ENCODE measurements at regions of chr1 and their contacts with region 1.

Region 1: DNA sequence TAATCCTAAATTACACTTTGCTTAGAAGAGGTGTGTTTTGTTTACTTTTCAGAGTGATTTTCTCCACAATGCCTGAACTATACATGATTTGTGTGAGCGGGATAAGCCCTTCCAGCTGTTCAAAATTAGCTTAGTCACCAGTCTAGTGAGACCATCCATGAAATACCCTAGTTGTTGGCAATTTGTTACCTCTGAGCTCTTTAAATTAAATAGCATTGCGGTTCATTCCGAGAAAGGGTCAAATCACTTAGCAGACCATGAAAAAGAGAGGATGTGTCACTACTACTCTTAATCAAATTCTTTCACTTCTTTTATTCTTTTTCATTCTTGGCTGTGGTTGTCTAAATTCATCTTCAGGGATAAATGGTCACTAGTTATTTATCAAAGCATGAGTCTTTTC is 11.9 kb upstream of the VAV3 start:
- DNase-seq: peak; percentile 59
- H3K4me3 ChIP-seq: no peak overlapping the region
- H3K27ac ChIP-seq: no peak overlapping the region
- H3K4me1 ChIP-seq: peaks cover 4% of the 10 kb centered on the region
- H3K27me3 ChIP-seq: peaks cover 34% of the 10 kb centered on the region
- CTCF ChIP-seq: no peak

Region 2: GRCh38 chr1:108034406-108034805 is 57.6 kb after region 1 on chr1:
- CTCF ChIA-PET with region 1: no interaction called
- POLR2A ChIA-PET with region 1: no interaction called
- intact Hi-C with region 1: loop called (anchors 5 kb)
- DNase-seq: no peak
- H3K4me3 ChIP-seq: no peak overlapping the region
- H3K27ac ChIP-seq: no peak overlapping the region
- H3K4me1 ChIP-seq: no peaks in the 10 kb centered on the region
- H3K27me3 ChIP-seq: no peaks in the 10 kb centered on the region
- CTCF ChIP-seq: no peak

Measured in A673 (cell line).